Prostate gland (tissue), 2 donors: ENCODE measurements at regions of chrX and their contacts with region 1.

Region 1: DNA sequence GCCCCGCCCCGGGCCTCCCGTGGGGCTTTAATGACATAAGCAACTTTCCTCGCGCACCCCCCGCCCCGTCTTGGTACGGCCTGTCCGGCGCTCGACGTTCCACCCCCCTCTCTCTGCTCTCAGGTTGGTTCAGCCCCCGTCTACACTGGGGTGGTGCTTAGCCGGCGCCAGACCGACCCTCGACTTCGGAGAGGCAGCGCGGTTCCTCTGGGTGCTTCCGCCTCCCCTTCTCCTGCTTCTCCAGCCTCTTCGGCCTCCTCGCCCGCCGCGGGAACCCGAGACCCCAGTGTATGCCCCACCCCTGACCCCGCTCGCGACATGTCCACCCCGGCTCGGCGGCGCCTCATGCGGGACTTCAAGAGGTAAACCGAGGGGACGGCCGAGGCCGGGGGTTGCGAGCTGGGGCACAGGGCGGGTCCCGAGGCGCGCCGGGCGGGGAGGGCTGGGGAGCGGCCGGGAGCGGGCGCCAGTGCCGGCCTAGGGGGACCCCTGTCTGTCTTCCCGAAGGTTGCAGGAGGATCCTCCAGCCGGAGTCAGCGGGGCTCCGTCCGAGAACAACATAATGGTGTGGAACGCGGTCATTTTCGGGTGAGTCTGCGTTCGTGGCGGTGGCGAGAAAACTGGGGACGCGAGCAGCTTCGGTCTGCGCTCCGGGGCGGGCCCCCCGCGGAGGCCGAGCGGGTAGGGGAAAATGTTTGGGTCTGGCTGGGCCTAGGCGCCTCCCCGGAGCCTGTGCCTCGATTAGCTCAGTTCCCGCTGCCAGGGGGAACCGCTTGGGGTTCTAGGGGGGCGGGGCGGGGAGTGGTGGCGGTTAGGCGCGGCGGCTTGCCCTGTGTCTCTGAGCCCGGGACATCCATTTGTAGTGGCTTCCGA is at the start of gene UBE2A:
- DNase-seq: peak; percentile 82
- H3K4me3 ChIP-seq: peak within 1 kb of the TSS; percentile 58 to 59
- H3K27ac ChIP-seq: peak within 1 kb of the TSS; percentile 90 to 93
- H3K4me1 ChIP-seq: no peaks in the 10 kb centered on the region
- H3K27me3 ChIP-seq: no peaks in the 10 kb centered on the region
- CTCF ChIP-seq: peak in 2 of 4 experiments; percentile 29 to 42
- POLR2A ChIP-seq: peak; percentile 61
- total RNA-seq, gene UBE2A: 19.8 to 32.9 TPM

Region 2: DNA sequence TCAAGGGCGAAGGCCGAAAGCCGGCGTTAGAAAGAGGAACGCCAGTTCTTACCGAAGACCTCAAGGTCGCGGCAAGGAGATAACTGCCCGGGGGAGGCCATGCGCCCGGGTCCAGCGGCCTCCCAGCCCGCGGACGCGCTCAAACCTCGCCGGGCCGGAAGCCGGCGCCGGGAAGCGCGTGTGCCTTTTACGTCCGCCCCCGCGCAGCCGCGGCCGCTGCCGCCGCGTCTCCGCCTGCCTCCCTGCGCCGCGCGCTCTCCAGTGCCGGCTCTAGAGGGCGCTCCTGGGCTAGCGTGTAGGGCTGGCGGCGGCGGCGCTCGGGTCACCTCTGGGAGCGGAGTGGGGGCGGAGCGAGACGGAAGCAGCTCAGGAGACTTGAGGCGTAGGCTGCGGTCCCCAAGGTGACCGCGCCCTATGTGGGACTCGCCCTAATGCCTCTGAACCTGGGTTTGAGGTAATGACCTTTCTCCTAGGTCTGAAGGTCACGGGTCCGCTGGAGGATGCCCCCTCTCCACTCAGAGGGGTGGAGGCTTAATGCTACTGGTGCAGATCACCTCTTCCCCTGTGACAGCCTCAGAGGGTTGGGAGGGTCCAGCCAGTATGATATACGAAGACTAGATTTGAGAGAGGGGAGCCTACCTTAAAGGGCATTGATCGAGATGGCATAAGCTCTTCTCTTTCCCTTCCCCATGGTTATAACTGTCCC is 105.5 kb before region 1 on chrX:
- intact Hi-C with region 1: loop called (anchors 10 kb)
- DNase-seq: peak; percentile 79
- H3K4me3 ChIP-seq: peak overlapping the region; percentile 52 to 53
- H3K27ac ChIP-seq: peak overlapping the region; percentile 87 to 88
- H3K4me1 ChIP-seq: no peaks in the 10 kb centered on the region
- H3K27me3 ChIP-seq: no peaks in the 10 kb centered on the region
- CTCF ChIP-seq: peak; percentile 65 to 90 (median 79)
- POLR2A ChIP-seq: peak; percentile 45

Region 3: GRCh38 chrX:119516157-119516702 is 58.4 kb before region 1 on chrX:
- intact Hi-C with region 1: loop called (anchors 10 kb)
- DNase-seq: no peak
- H3K4me3 ChIP-seq: no peak overlapping the region
- H3K27ac ChIP-seq: no peak overlapping the region
- H3K4me1 ChIP-seq: no peaks in the 10 kb centered on the region
- H3K27me3 ChIP-seq: no peaks in the 10 kb centered on the region
- CTCF ChIP-seq: peak; percentile 33 to 70 (median 54)
- POLR2A ChIP-seq: no peak